ENCODE measurements at regions of chr17 and their contacts with region 1.

Region 1: GRCh38 chr17:7834962-7835813 is 1.2 kb downstream of the KDM6B start:
- DNase-seq: peak; percentile 74 to 98 (median 86)
- ATAC-seq: peak; percentile 54
- H3K4me3 ChIP-seq: peak overlapping the region; percentile 82
- H3K4me3 Mint-ChIP-seq: peak overlapping the region; percentile 93
- H3K27ac ChIP-seq: peak overlapping the region; percentile 98 to 100
- H3K27ac Mint-ChIP-seq: peak overlapping the region; percentile 98
- H3K4me1 ChIP-seq: peaks cover 62% of the 10 kb centered on the region
- H3K4me1 Mint-ChIP-seq: peaks cover 42% of the 10 kb centered on the region
- H3K27me3 ChIP-seq: no peaks in the 10 kb centered on the region
- H3K27me3 Mint-ChIP-seq: peaks cover 4% of the 10 kb centered on the region
- CTCF ChIP-seq: peak; percentile 84

Region 2: DNA sequence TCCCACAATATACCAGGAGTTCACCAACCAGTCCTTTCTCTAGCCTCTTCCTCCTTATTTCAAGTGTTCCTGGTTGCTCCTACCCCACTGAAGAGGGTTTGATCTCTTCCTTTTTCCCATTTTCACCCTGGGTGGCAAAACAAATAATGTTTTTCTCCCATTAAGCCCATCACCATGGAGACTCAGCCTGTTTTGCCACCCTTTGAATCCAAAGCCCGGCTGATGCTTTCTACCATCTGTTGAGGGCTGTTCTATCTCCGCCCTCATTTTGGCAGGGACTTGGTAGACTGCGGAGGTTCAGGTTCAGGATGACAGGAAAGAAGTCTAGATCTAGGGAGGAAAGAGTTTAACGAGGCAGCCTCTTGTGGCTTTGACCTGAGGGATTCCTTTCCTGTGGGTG is 115.1 kb before region 1 on chr17:
- CTCF ChIA-PET with region 1: no interaction called
- POLR2A ChIA-PET with region 1: no interaction called
- intact Hi-C with region 1: no loop called
- DNase-seq: no peak
- ATAC-seq: no peak
- H3K4me3 ChIP-seq: no peak overlapping the region
- H3K4me3 Mint-ChIP-seq: no peak overlapping the region
- H3K27ac ChIP-seq: no peak overlapping the region
- H3K27ac Mint-ChIP-seq: no peak overlapping the region
- H3K4me1 ChIP-seq: peaks cover 21% of the 10 kb centered on the region
- H3K4me1 Mint-ChIP-seq: peaks cover 23% of the 10 kb centered on the region
- H3K27me3 ChIP-seq: peaks cover 54 to 58% of the 10 kb centered on the region in 2 experiments
- H3K27me3 Mint-ChIP-seq: peaks cover 75% of the 10 kb centered on the region
- CTCF ChIP-seq: no peak

Region 3: GRCh38 chr17:7851438-7852256 is 16.5 kb after region 1 on chr17:
- CTCF ChIA-PET with region 1: interaction called, 28 read pairs
- POLR2A ChIA-PET with region 1: interaction called, 83 read pairs
- intact Hi-C with region 1: loop called (anchors 1 to 2 kb)
- DNase-seq: peak; percentile 93 to 99 (median 94)
- ATAC-seq: peak; percentile 82
- H3K4me3 ChIP-seq: peak overlapping the region; percentile 54
- H3K4me3 Mint-ChIP-seq: peak overlapping the region; percentile 84
- H3K27ac ChIP-seq: peak overlapping the region; percentile 57 to 59
- H3K27ac Mint-ChIP-seq: peak overlapping the region; percentile 95
- H3K4me1 ChIP-seq: peaks cover 38% of the 10 kb centered on the region
- H3K4me1 Mint-ChIP-seq: peaks cover 14% of the 10 kb centered on the region
- H3K27me3 ChIP-seq: no peaks in the 10 kb centered on the region
- H3K27me3 Mint-ChIP-seq: no peaks in the 10 kb centered on the region
- CTCF ChIP-seq: peak; percentile 97

Region 4: GRCh38 chr17:7887482-7888183 is 52.4 kb after region 1 on chr17:
- CTCF ChIA-PET with region 1: interaction called, 3 read pairs
- POLR2A ChIA-PET with region 1: interaction called, 6 read pairs
- intact Hi-C with region 1: loop called in 1 of 2 experiments (anchors 2 kb)
- DNase-seq: peak; percentile 72 to 97 (median 86)
- ATAC-seq: peak; percentile 69
- H3K4me3 ChIP-seq: peak overlapping the region; percentile 98
- H3K4me3 Mint-ChIP-seq: no peak overlapping the region
- H3K27ac ChIP-seq: peak overlapping the region; percentile 75 to 96
- H3K27ac Mint-ChIP-seq: no peak overlapping the region
- H3K4me1 ChIP-seq: peaks cover 49% of the 10 kb centered on the region
- H3K4me1 Mint-ChIP-seq: peaks cover 6% of the 10 kb centered on the region
- H3K27me3 ChIP-seq: no peaks in the 10 kb centered on the region
- H3K27me3 Mint-ChIP-seq: no peaks in the 10 kb centered on the region
- CTCF ChIP-seq: no peak

Region 5: DNA sequence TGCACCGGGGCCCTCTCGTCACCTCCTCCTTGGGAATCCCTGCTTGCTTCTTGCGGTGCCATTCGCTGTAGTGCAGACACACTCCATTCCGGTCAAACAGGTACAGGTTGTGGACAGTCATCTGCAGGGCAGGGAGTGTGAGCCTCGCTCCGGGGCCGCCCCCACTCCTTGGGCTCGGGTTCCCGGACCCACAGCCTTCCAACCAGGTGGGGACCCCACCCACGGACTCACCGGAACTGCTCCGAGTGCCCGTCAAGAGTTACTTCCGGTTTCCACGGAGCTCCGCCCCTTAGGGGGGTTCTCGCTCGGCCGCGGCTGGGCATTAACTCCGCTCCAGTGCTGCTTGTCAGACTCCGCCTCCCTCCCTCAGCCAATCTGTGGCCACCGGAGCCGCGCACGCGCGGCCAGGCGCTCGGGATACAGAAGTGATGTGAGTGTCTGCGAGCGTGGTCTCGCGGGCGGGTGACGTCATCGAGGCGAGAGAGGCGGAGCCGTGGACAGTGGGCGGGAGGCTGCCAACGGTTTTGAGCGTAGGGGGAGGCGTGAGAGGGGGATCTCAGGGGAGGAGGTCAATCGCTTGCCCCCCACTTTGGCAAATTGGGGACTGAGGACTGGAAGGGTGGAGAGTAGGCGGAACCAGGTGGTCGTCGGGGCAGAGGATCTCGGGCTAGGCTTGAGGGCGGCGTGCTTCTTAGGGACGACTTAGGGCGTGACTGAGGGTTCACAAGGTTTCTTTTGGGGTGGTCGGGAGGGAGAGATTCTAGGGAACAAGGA is 96.7 kb after region 1 on chr17 and contains the starts of genes CNTROB and TRAPPC1:
- CTCF ChIA-PET with region 1: interaction called, 3 read pairs
- POLR2A ChIA-PET with region 1: interaction called, 10 read pairs
- intact Hi-C with region 1: no loop called
- DNase-seq: peak; percentile 97 to 100 (median 99)
- ATAC-seq: peak; percentile 92
- H3K4me3 ChIP-seq: peak within 1 kb of the TSS; percentile 94
- H3K4me3 Mint-ChIP-seq: peak within 1 kb of the TSS; percentile 97
- H3K27ac ChIP-seq: peak within 1 kb of the TSS; percentile 83
- H3K27ac Mint-ChIP-seq: peak within 1 kb of the TSS; percentile 90
- H3K4me1 ChIP-seq: peaks cover 40% of the 10 kb centered on the region
- H3K4me1 Mint-ChIP-seq: peaks cover 49% of the 10 kb centered on the region
- H3K27me3 ChIP-seq: no peaks in the 10 kb centered on the region
- H3K27me3 Mint-ChIP-seq: no peaks in the 10 kb centered on the region
- CTCF ChIP-seq: no peak
- total RNA-seq, gene CNTROB: 20.6 to 21.9 TPM
- total RNA-seq, gene TRAPPC1: 39.3 to 39.5 TPM

Region 6: DNA sequence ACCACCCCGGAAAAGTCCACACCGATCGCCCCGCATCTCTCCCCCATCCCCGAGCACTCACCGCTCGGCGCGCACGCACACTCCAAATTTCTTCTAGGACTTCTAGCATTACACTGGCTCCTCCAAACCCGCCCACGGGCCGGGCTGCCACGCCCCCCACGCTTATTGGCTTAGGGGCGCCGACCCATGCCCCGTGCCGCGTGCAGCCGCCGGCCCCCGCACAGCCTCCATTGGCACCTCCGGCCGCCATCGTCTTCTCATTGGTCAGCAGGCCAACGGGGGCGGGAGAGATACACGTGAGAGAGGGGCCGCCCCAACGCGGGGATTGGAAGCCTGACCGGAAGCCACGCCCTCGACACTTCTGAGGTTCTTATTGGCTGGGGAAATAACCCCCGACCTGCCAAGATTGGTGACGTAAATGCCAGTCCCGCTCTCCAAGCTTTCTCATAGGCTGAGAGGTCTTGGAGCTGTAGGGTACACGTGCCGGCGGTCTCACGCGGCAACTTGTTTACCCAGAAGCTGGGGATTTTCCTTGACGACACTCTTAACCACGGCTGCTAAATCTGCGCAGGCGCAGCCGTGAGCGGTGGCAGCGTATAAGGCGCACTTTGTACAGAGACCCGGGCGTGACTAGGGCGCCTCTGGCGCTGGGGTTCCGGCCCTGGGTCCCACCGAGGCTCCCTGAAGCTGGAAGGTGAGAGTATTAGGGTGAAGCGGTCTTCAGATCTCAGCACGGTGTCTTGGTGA is 321.2 kb after region 1 on chr17:
- CTCF ChIA-PET with region 1: no interaction called
- POLR2A ChIA-PET with region 1: interaction called, 7 read pairs
- intact Hi-C with region 1: loop called (anchors 5 to 10 kb)
- DNase-seq: peak; percentile 99 to 100 (median 100)
- ATAC-seq: peak; percentile 70
- H3K4me3 ChIP-seq: peak overlapping the region; percentile 86
- H3K4me3 Mint-ChIP-seq: no peak overlapping the region
- H3K27ac ChIP-seq: peak overlapping the region; percentile 99 to 100
- H3K27ac Mint-ChIP-seq: no peak overlapping the region
- H3K4me1 ChIP-seq: peaks cover 88% of the 10 kb centered on the region
- H3K4me1 Mint-ChIP-seq: peaks cover 73% of the 10 kb centered on the region
- H3K27me3 ChIP-seq: no peaks in the 10 kb centered on the region
- H3K27me3 Mint-ChIP-seq: peaks cover 3% of the 10 kb centered on the region
- CTCF ChIP-seq: no peak

Region 7: GRCh38 chr17:9271989-9272388 is 1436.8 kb after region 1 on chr17:
- CTCF ChIA-PET with region 1: no interaction called
- POLR2A ChIA-PET with region 1: no interaction called
- intact Hi-C with region 1: no loop called
- DNase-seq: no peak
- ATAC-seq: no peak
- H3K4me3 ChIP-seq: no peak overlapping the region
- H3K4me3 Mint-ChIP-seq: no peak overlapping the region
- H3K27ac ChIP-seq: no peak overlapping the region
- H3K27ac Mint-ChIP-seq: no peak overlapping the region
- H3K4me1 ChIP-seq: no peaks in the 10 kb centered on the region
- H3K4me1 Mint-ChIP-seq: peaks cover 29% of the 10 kb centered on the region
- H3K27me3 ChIP-seq: no peaks in the 10 kb centered on the region
- H3K27me3 Mint-ChIP-seq: no peaks in the 10 kb centered on the region
- CTCF ChIP-seq: no peak